ENCODE measurements at regions of chr19 and their contacts with region 1.

Region 1: DNA sequence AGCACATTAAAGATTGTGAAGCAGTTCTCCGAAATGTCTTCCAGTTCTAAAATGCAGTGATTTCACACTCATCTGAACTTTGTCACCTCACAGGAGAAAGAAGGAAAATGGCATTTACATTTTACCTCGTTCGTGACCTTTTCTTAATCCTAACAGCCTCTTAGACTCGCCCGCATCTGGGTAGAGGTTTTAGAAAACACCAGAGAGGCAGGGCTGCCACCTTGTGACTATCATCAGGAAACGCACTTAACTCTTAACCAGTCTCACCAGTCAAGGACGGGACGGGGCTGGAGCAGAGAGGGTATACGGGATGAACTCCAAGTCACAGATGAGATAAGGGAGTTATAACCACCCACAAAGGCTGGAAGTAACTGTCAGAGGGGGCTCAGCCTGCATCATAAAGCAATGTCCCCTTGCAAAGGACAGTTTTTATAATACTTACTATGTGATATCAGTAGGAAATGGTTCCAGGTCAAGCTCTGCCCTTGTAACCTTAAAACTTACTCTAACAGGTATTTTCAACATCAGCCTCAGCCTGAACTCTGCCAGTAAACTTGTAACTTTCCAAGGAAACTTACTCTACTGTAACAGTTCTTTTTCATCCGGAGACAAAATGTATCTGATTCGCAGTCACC is 8.6 kb upstream of the CEACAM6 start:
- DNase-seq: peak in 4 of 6 donors; percentile 41 to 66 (median 57)
- ATAC-seq: peak; percentile 51 to 73 (median 68)
- H3K4me3 ChIP-seq: no peak overlapping the region
- H3K27ac ChIP-seq: no peak overlapping the region
- H3K4me1 ChIP-seq: peaks cover 0 to 9% (median 6%) of the 10 kb centered on the region in 3 donors
- H3K27me3 ChIP-seq: no peaks in the 10 kb centered on the region
- CTCF ChIP-seq: peak; percentile 23 to 46 (median 34)

Region 2: GRCh38 chr19:41641879-41642485 is 104.7 kb before region 1 on chr19:
- intact Hi-C with region 1: loop called in 1 of 3 experiments (anchors 5 kb)
- DNase-seq: peak; percentile 41 to 75 (median 64)
- ATAC-seq: peak; percentile 77 to 98 (median 93)
- H3K4me3 ChIP-seq: no peak overlapping the region
- H3K27ac ChIP-seq: no peak overlapping the region
- H3K4me1 ChIP-seq: no peaks in the 10 kb centered on the region
- H3K27me3 ChIP-seq: no peaks in the 10 kb centered on the region
- CTCF ChIP-seq: peak; percentile 76 to 85 (median 82)

Measured in pancreas (tissue), 10 donors.